CD14-positive monocyte (primary cell): ENCODE measurements at regions of chr18 and their contacts with region 1.

Region 1: GRCh38 chr18:52716973-52717372 is 377.0 kb downstream of the DCC start:
- DNase-seq: no peak
- H3K4me3 ChIP-seq: no peak overlapping the region
- H3K4me3 Mint-ChIP-seq: no peak overlapping the region
- H3K27ac ChIP-seq: no peak overlapping the region
- H3K27ac Mint-ChIP-seq: no peak overlapping the region
- H3K4me1 ChIP-seq: no peaks in the 10 kb centered on the region
- H3K4me1 Mint-ChIP-seq: no peaks in the 10 kb centered on the region
- H3K27me3 ChIP-seq: no peaks in the 10 kb centered on the region
- H3K27me3 Mint-ChIP-seq: peaks cover 0 to 5% (median 0%) of the 10 kb centered on the region in 3 donors
- CTCF ChIP-seq: no peak

Region 2: GRCh38 chr18:52636536-52636935 is 80.4 kb before region 1 on chr18:
- intact Hi-C with region 1: no loop called
- DNase-seq: no peak
- H3K4me3 ChIP-seq: no peak overlapping the region
- H3K4me3 Mint-ChIP-seq: no peak overlapping the region
- H3K27ac ChIP-seq: no peak overlapping the region
- H3K27ac Mint-ChIP-seq: peak overlapping the region in 1 of 7 donors; percentile 6
- H3K4me1 ChIP-seq: no peaks in the 10 kb centered on the region
- H3K4me1 Mint-ChIP-seq: no peaks in the 10 kb centered on the region
- H3K27me3 ChIP-seq: no peaks in the 10 kb centered on the region
- H3K27me3 Mint-ChIP-seq: peaks cover 0 to 2% (median 0%) of the 10 kb centered on the region in 3 donors
- CTCF ChIP-seq: no peak

Region 3: GRCh38 chr18:52791321-52791720 is 74.3 kb after region 1 on chr18:
- intact Hi-C with region 1: loop called in 1 of 2 experiments (anchors 10 kb)
- DNase-seq: no peak
- H3K4me3 ChIP-seq: no peak overlapping the region
- H3K4me3 Mint-ChIP-seq: no peak overlapping the region
- H3K27ac ChIP-seq: no peak overlapping the region
- H3K27ac Mint-ChIP-seq: no peak overlapping the region
- H3K4me1 ChIP-seq: no peaks in the 10 kb centered on the region
- H3K4me1 Mint-ChIP-seq: no peaks in the 10 kb centered on the region
- H3K27me3 ChIP-seq: no peaks in the 10 kb centered on the region
- H3K27me3 Mint-ChIP-seq: no peaks in the 10 kb centered on the region
- CTCF ChIP-seq: no peak

Region 4: DNA sequence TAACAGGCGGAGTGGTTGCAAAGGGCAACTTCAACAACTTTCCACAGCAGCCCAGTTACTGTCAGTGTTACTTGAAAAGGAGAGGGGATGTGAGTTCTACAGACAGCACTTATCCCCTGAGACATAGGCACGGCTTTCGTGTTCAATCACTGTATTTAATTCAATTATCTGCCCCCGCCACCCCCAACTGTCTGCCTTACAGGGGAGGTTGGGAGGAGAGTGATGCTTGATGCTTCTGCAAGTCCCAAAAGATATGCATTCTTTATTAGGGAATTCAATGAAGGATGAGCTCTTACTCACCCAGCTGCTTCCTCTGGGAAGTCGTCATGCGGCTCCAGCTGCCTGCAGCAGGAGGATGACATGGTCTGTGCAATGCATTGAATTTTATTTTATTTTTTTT is 262.9 kb after region 1 on chr18:
- intact Hi-C with region 1: no loop called
- DNase-seq: no peak
- H3K4me3 ChIP-seq: no peak overlapping the region
- H3K4me3 Mint-ChIP-seq: no peak overlapping the region
- H3K27ac ChIP-seq: no peak overlapping the region
- H3K27ac Mint-ChIP-seq: no peak overlapping the region
- H3K4me1 ChIP-seq: no peaks in the 10 kb centered on the region
- H3K4me1 Mint-ChIP-seq: no peaks in the 10 kb centered on the region
- H3K27me3 ChIP-seq: no peaks in the 10 kb centered on the region
- H3K27me3 Mint-ChIP-seq: no peaks in the 10 kb centered on the region
- CTCF ChIP-seq: no peak